ENCODE measurements at regions of chr4 and their contacts with region 1.

Region 1: DNA sequence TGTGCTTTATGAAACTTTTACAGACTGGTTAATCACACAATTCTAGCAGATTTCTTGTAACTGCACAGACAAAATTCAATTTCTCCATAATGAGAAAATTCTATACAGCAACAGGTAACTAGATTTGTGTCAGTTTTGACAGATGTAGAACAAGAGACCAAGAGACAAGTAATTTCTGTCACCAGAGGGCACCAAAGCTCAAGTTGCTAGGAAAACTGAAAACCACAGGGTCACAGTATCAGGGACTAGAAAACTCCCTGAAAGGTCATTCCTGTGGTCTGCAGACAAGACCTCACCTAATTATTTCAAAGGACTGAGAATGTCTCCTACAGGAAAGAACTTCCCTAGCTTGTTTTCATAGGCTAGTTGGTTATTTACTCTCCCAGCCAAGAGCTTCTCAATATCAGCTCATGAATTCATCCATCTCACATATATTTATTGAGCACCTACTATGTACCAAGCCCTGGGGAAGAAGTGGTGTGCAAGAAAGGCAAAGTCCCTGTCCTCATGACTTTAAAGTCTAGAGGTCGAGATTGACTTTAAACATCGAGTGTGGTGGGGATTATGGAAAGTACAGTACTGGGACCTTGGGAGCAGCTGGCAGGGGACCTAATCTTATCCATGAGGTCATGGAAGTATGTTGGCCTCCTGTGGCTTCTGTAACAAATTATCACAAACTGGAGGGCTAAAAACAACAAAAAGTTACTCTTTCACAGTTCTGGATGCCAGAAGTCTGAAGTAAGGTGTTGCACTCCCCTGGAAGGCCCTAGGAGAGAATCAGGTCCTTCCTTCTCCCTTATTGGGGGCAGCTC is 47.8 kb upstream of the SETD7 start:
- DNase-seq: peak; percentile 45
- CTCF ChIP-seq: peak; percentile 60

Region 2: DNA sequence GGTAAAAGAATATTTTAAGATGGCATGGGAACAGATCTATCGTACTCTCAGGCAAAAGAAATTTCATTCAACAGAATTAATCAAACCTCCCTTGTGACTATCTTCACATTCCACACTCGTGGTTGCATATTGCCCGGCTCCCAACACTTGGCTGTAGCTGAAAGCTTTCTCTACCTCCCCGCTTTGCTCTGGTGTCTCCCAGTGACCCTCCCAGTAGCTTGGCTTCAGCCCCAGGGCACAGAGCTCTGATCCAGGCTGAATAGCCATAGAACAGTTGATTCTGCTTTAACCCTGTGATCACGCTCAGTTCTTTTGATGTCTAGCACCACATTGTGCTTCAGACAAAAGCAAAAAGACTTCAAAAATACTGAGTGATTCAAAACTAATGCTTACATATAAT is 1386.2 kb before region 1 on chr4:
- in situ Hi-C with region 1: no loop called
- DNase-seq: no peak
- CTCF ChIP-seq: no peak

Region 3: DNA sequence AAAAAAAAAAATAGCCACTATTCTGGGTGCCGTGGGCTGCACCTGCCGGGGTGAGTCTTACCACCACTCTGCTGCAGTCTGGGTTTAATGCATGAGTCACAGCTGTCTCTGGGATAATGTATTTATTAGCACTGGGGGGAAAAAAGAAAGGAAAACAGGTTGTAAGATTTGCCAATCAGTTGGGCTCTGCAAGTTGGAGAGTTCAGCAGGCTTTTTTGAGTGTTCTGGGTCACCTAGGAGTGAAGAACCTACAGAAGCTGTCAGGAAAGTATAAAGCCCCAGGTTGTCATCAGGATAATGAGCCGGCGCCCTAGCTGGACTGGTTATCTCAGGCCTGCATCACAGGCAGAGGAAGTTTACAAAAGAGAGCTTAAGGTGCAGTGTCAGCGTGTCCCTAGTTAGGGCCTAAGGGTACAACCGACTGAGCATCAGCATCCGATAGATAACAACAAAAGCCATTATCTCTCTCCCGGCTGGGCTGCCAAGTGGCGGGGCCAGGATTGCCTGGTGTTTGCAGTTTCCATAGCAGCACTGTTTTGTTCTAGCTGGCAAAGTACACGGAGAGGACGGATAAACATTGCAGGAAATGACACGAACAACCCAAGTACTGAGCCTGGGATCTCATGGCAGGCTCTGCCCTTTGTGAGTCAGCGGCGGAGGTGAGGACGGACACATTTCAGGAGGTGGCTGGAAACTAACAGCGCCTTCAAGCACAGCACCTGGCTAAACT is 693.0 kb before region 1 on chr4:
- in situ Hi-C with region 1: no loop called
- DNase-seq: no peak
- CTCF ChIP-seq: no peak

Region 4: DNA sequence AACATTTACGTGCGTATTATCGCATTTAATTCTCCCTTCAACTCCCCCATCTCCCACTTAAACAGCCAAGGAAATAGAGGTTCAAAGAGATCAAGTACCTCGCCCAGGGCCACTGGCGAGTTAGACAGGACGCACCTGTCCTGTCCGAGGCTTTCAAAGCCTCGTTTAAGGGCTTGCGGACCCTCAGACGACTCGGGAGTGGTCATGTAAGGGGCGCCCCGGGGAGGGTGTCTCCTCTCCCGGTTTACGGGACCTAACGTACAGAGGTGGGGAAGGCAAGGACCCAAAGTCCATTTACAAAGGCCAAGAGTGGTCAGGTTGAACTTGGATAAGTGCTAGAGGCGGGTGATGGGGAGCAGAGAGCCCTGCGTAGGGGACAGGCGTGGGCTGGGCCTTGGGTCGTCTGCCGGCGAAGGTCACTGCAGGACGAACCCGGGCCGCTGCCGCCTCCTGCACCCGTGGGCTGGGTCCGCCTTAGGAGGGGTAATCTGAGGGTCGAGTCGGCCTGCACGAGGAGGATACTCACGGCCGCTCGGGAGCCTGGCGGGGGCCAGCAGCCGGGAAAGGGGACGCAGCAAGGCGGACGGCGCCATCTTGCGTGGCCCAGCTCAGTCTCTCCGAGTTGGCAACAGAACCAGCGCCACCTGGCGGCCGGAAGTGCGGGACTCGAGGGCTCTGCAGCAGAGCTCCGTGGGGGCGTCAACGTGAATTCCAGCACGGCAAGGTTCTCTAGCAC is 308.4 kb before region 1 on chr4:
- in situ Hi-C with region 1: no loop called
- DNase-seq: peak; percentile 85
- CTCF ChIP-seq: peak; percentile 98

Region 5: GRCh38 chr4:140252742-140253555 is 649.2 kb after region 1 on chr4:
- in situ Hi-C with region 1: loop called (anchors 25 kb)
- DNase-seq: peak; percentile 69
- CTCF ChIP-seq: peak; percentile 98

Measured in GM13977 (cell line).